ENCODE measurements at regions of chr15 and their contacts with region 1.

Region 1: DNA sequence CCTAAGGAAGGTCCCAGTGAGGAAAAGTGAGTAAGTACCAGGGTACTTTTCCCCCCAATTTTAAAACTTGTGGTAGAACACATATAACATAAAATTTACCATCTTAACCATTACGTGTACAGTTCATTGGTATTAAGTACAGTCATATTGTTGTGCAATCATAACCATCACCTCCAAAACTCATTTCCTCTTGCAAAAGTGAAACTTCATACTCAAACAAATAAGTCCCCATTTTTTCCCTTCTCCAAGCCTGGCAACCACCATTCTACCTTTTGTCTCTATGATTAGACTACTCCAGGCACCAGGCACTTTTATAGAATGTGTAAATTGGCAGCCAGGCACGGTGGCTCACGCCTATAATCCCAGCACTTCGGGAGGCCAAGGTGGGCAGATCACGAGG is 12.2 kb downstream of the PRC1 start:
- DNase-seq: no peak
- H3K4me3 Mint-ChIP-seq: no peak overlapping the region
- H3K27ac Mint-ChIP-seq: no peak overlapping the region
- H3K4me1 Mint-ChIP-seq: peaks cover 3% of the 10 kb centered on the region
- H3K27me3 Mint-ChIP-seq: no peaks in the 10 kb centered on the region
- CTCF ChIP-seq: no peak

Region 2: DNA sequence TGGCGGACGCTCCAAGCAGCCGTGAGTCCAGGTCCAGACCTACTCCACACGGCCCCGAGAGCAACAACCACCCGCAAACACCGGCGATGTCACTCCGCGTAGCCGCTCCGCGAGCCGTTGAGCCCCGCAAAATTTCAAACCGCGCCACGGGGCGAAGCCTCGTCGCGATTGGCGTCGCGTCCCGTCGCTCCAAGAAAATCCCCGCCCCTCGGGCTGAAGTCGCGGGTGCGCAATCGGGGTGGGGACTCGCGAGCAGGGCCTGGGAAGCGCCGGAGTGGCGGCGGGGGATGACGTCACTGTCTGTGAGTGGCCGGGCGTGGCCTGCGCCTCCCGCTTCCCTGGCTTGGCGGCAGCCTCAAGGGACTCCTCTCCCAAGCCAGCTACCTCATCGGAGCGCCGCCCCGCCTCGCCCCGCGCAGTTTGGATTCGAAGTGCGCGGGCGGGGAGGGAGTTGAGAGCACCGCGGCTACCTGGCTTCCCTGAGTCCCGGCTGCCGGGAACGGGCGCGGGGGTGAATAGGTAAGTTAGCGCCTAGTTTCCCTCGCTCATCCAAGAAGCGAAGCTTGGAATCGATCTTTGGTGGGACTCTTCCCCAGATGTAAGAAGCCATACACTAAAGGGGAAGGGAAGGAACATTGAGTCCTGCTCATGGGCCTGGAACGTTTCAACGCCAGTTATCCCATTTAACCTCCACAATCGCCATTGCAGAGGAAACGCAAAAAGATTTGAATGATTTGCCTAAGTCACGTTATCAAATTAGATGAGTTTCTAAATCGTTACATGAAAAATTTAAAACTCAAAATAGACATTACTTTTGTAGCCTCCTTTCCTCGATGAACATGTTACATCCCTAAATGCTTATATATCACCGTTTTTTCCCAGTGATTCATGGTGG is 12.5 kb after region 1 on chr15 and contains the start of gene PRC1:
- CTCF ChIA-PET with region 1: interaction called, 10 read pairs
- intact Hi-C with region 1: no loop called
- DNase-seq: peak; percentile 100
- H3K4me3 Mint-ChIP-seq: peak within 1 kb of the TSS; percentile 92
- H3K27ac Mint-ChIP-seq: peak within 1 kb of the TSS; percentile 99
- H3K4me1 Mint-ChIP-seq: peaks cover 16% of the 10 kb centered on the region
- H3K27me3 Mint-ChIP-seq: no peaks in the 10 kb centered on the region
- CTCF ChIP-seq: no peak
- total RNA-seq, gene PRC1: 208 and 260 TPM in 2 replicates

Region 3: GRCh38 chr15:91022075-91022835 is 40.1 kb after region 1 on chr15 and contains the start of gene VPS33B:
- CTCF ChIA-PET with region 1: interaction called, 3 read pairs
- intact Hi-C with region 1: loop called (anchors 5 kb)
- DNase-seq: peak; percentile 84
- H3K4me3 Mint-ChIP-seq: peak within 1 kb of the TSS; percentile 76
- H3K27ac Mint-ChIP-seq: peak within 1 kb of the TSS; percentile 89
- H3K4me1 Mint-ChIP-seq: peaks cover 35% of the 10 kb centered on the region
- H3K27me3 Mint-ChIP-seq: no peaks in the 10 kb centered on the region
- CTCF ChIP-seq: no peak
- total RNA-seq, gene VPS33B: 18.4 and 21.9 TPM in 2 replicates

Region 4: DNA sequence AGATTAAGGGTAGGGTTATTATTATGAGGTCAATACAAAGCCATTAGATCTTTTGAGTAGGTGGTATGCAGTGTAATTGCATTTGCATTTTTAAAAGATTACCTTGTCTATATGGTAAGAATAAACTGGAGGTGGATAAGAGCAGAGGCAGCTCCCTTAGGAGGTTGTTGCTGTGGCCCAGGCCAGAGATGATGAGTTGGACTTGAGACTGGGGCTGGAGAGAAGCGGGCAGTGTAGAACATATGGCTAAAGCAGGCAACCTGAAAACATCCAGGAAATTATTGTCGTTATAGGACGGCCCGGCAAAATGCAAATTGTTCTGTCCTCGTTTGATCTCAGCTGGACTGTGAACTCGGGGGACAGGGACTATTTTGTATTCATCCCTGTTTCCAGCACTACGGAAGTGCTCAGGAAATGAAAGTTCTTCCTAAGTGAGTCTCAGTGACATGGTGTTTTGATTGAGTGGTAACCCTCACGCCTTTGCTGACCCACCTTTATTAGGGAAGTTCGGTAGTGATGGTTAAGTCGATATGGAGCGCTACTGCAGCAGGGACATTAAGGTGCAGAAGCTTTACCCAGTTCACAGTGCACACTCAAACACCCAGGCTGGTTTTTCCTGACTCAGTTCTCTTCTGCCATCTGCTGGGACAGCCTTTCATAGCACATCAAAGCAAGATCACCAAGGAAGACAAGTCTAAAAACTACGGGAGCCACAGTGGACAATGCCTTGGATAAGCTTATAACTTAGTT is 67.4 kb after region 1 on chr15:
- CTCF ChIA-PET with region 1: no interaction called
- intact Hi-C with region 1: loop called (anchors 5 kb)
- DNase-seq: peak; percentile 73
- H3K4me3 Mint-ChIP-seq: no peak overlapping the region
- H3K27ac Mint-ChIP-seq: no peak overlapping the region
- H3K4me1 Mint-ChIP-seq: no peaks in the 10 kb centered on the region
- H3K27me3 Mint-ChIP-seq: peaks cover 85% of the 10 kb centered on the region
- CTCF ChIP-seq: peak; percentile 63

Region 5: GRCh38 chr15:91603384-91604080 is 621.4 kb after region 1 on chr15:
- CTCF ChIA-PET with region 1: no interaction called
- intact Hi-C with region 1: no loop called
- DNase-seq: no peak
- H3K4me3 Mint-ChIP-seq: no peak overlapping the region
- H3K27ac Mint-ChIP-seq: no peak overlapping the region
- H3K4me1 Mint-ChIP-seq: no peaks in the 10 kb centered on the region
- H3K27me3 Mint-ChIP-seq: peaks cover under 1% of the 10 kb centered on the region
- CTCF ChIP-seq: no peak